CD14-positive monocyte (primary cell): ENCODE measurements at regions of chr9 and their contacts with region 1.

Region 1: GRCh38 chr9:104863180-104863883 is 64.6 kb downstream of the ABCA1 start:
- DNase-seq: peak; percentile 61 to 71 (median 69)
- H3K4me3 ChIP-seq: no peak overlapping the region
- H3K4me3 Mint-ChIP-seq: no peak overlapping the region
- H3K27ac ChIP-seq: peak overlapping the region in 1 of 2 donors; percentile 24
- H3K27ac Mint-ChIP-seq: peak overlapping the region in 6 of 7 donors; percentile 38 to 76 (median 56)
- H3K4me1 ChIP-seq: peaks cover 51 to 74% of the 10 kb centered on the region in 2 donors
- H3K4me1 Mint-ChIP-seq: peaks cover 69% of the 10 kb centered on the region
- H3K27me3 ChIP-seq: no peaks in the 10 kb centered on the region
- H3K27me3 Mint-ChIP-seq: no peaks in the 10 kb centered on the region
- CTCF ChIP-seq: peak; percentile 81

Region 2: DNA sequence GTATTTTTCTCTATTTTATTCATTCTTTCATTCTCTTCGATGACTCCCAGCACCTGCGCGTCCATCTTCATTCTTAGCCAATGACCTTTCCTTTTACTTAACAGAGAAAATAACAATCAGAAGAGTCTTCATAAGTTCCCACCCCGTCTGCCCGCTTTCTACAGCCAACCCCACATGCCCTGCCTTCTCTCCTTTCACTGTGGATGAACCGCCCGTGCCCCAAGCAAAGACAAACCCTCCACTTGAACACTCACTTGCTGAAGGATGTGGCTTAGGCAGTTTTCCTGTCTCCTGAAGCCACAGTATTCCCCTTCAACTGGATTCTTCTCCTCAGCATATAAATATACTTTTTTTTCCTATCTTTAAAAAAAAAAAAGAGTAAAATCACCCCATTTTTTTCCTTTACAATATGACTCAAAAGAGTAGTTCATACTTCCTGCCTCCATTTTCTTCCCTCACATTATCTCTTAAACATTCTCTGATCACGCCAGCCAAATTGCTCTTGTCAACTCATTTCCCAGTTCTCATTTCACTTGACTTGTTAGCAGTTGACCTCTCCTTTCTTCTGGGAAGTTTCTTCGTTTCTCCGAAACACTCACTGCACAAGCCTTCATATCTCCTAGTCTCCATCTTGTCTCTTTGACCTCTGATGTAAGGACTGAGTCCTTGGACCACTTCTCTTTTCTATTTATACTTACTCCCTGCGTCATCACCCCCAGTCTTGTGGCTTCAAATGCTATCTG is 88.3 kb before region 1 on chr9:
- intact Hi-C with region 1: loop called in 1 of 2 experiments (anchors 5 kb)
- DNase-seq: peak; percentile 83 to 91 (median 89)
- H3K4me3 ChIP-seq: peak overlapping the region in 1 of 3 experiments; percentile 25
- H3K4me3 Mint-ChIP-seq: no peak overlapping the region
- H3K27ac ChIP-seq: peak overlapping the region; percentile 69 to 86
- H3K27ac Mint-ChIP-seq: no peak overlapping the region
- H3K4me1 ChIP-seq: peaks cover 41 to 57% of the 10 kb centered on the region in 2 donors
- H3K4me1 Mint-ChIP-seq: peaks cover 25% of the 10 kb centered on the region
- H3K27me3 ChIP-seq: no peaks in the 10 kb centered on the region
- H3K27me3 Mint-ChIP-seq: no peaks in the 10 kb centered on the region
- CTCF ChIP-seq: no peak

Region 3: GRCh38 chr9:104911032-104911607 is 47.8 kb after region 1 on chr9:
- intact Hi-C with region 1: loop called in 1 of 2 experiments (anchors 5 kb)
- DNase-seq: peak in 2 of 3 donors; percentile 42 to 56
- H3K4me3 ChIP-seq: no peak overlapping the region
- H3K4me3 Mint-ChIP-seq: no peak overlapping the region
- H3K27ac ChIP-seq: no peak overlapping the region
- H3K27ac Mint-ChIP-seq: peak overlapping the region in 2 of 7 donors; percentile 14 to 72
- H3K4me1 ChIP-seq: peaks cover 24 to 29% of the 10 kb centered on the region in 2 donors
- H3K4me1 Mint-ChIP-seq: peaks cover 42% of the 10 kb centered on the region
- H3K27me3 ChIP-seq: no peaks in the 10 kb centered on the region
- H3K27me3 Mint-ChIP-seq: peaks cover 0 to 2% (median 0%) of the 10 kb centered on the region in 3 donors
- CTCF ChIP-seq: no peak